Endothelial cell of umbilical vein (primary cell): ENCODE measurements at regions of chr6 and their contacts with region 1.

Region 1: DNA sequence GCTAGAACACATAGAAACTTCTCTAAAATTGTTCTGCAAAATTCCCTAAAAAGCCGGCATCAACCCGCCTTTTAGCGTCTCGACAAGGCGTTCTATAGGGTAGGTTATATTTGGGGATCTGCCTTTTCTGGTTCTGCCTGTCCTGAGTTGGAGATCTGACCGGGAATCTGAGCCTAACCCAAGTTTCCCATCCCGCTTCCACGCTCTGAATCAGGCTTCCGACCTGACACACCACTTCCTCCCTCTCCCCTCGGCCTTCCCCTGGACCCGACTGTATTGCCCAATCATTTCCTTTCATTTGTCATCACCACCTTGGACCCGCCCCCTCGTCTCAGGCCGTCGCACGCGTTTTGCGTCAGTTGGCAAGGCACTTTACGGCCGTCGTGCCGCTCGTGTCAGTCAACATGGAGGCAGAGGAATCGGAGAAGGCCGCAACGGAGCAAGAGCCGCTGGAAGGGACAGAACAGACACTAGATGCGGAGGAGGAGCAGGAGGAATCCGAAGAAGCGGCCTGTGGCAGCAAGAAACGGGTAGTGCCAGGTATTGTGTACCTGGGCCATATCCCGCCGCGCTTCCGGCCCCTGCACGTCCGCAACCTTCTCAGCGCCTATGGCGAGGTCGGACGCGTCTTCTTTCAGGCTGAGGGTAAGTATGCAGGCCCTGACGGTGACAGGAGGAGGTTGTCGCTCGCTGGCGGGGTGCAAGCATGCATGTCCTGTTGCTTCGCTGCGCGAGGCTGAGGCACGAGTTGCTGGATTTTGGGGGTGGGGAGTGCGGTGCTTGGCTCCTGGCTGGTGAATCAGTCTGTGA is at the start of gene ABT1:
- DNase-seq: peak; percentile 99
- H3K4me3 ChIP-seq: peak within 1 kb of the TSS; percentile 30 to 87 (median 69)
- H3K27ac ChIP-seq: peak within 1 kb of the TSS; percentile 80
- H3K4me1 ChIP-seq: peaks cover 18% of the 10 kb centered on the region
- H3K27me3 ChIP-seq: peaks cover 8 to 11% of the 10 kb centered on the region in 2 experiments
- CTCF ChIP-seq: no peak
- POLR2A ChIP-seq: peak; percentile 80
- total RNA-seq, gene ABT1: 18.5 and 20.1 TPM in 2 replicates

Region 2: GRCh38 chr6:26270903-26271667 is 325.7 kb before region 1 on chr6:
- CTCF ChIA-PET with region 1: interaction called, 15 read pairs
- POLR2A ChIA-PET with region 1: no interaction called
- dilution Hi-C with region 1: no loop called
- intact Hi-C with region 1: no loop called
- DNase-seq: peak; percentile 93
- H3K4me3 ChIP-seq: peak overlapping the region; percentile 41 to 77 (median 51)
- H3K27ac ChIP-seq: peak overlapping the region; percentile 72
- H3K4me1 ChIP-seq: peaks cover 25% of the 10 kb centered on the region
- H3K27me3 ChIP-seq: no peaks in the 10 kb centered on the region
- CTCF ChIP-seq: no peak
- POLR2A ChIP-seq: peak; percentile 90

Region 3: GRCh38 chr6:26336355-26337198 is 260.2 kb before region 1 on chr6:
- CTCF ChIA-PET with region 1: interaction called, 159 read pairs
- POLR2A ChIA-PET with region 1: interaction called, 4 read pairs
- dilution Hi-C with region 1: no loop called
- intact Hi-C with region 1: loop called (anchors 1 kb)
- DNase-seq: no peak
- H3K4me3 ChIP-seq: no peak overlapping the region
- H3K27ac ChIP-seq: no peak overlapping the region
- H3K4me1 ChIP-seq: peaks cover 15% of the 10 kb centered on the region
- H3K27me3 ChIP-seq: peaks cover 0 to 2% of the 10 kb centered on the region in 2 experiments
- CTCF ChIP-seq: no peak
- POLR2A ChIP-seq: no peak

Region 4: GRCh38 chr6:26553635-26554446 is 42.9 kb before region 1 on chr6:
- CTCF ChIA-PET with region 1: interaction called, 10 read pairs
- POLR2A ChIA-PET with region 1: no interaction called
- dilution Hi-C with region 1: no loop called
- intact Hi-C with region 1: no loop called
- DNase-seq: peak; percentile 93
- H3K4me3 ChIP-seq: peak overlapping the region; percentile 29 to 94 (median 70)
- H3K27ac ChIP-seq: peak overlapping the region; percentile 71
- H3K4me1 ChIP-seq: peaks cover 13% of the 10 kb centered on the region
- H3K27me3 ChIP-seq: no peaks in the 10 kb centered on the region
- CTCF ChIP-seq: no peak
- POLR2A ChIP-seq: no peak

Region 5: GRCh38 chr6:26659042-26659999 is 62.5 kb after region 1 on chr6 and contains the start of gene ZNF322:
- CTCF ChIA-PET with region 1: interaction called, 5 read pairs
- POLR2A ChIA-PET with region 1: interaction called, 3 read pairs
- dilution Hi-C with region 1: no loop called
- intact Hi-C with region 1: loop called (anchors 1 kb)
- DNase-seq: peak; percentile 95
- H3K4me3 ChIP-seq: peak within 1 kb of the TSS; percentile 53 to 89 (median 70)
- H3K27ac ChIP-seq: peak within 1 kb of the TSS; percentile 58
- H3K4me1 ChIP-seq: peaks cover 9% of the 10 kb centered on the region
- H3K27me3 ChIP-seq: peaks cover 6 to 13% of the 10 kb centered on the region in 2 experiments
- CTCF ChIP-seq: no peak
- POLR2A ChIP-seq: no peak
- total RNA-seq, gene ZNF322: 15.2 and 17.0 TPM in 2 replicates

Region 6: DNA sequence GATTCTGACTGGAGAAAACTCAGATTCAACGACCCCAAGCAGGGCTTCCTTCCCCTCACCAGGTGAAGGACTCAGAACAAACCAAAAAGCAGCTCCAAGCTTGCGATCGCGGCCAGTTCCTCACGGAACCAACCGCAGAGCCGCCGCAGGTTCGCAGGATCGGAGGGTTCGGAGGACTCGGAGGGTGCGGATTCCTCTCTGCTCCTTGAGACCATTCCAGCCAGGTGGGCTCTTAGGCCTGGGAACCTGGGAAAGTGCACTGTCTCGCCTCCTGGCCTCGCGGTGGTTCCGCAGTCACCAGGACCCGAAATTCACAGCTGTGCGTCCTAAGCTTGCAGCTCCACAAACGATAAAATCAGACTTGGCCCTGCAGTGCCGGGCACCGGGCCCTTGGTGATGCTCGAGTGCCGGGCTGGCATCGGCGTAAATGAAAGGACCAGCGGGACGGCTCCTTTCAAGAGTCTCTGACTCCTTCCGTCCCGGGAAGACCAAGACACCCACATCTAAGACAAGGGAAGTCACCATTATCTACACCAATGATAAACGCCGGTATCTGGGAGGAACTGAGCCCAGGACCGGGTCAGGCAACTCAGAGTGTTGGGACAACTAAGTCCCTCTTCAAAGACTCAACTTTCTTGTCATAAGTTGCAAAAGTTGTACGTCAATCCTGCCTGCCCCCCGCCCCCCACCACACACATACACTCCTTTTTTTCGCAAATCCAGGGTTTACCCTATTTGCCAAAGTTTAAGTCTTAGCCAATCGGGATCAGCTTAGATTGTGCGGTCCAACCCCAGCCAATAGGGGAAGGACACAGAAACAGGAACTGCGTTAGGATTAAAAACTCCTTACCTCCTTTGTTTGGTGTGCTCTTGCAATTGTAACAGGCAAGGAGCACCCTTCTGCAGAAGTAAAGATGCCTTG is 581.0 kb after region 1 on chr6:
- CTCF ChIA-PET with region 1: interaction called, 5 read pairs
- POLR2A ChIA-PET with region 1: no interaction called
- dilution Hi-C with region 1: no loop called
- intact Hi-C with region 1: loop called (anchors 5 kb)
- DNase-seq: peak; percentile 88
- H3K4me3 ChIP-seq: peak overlapping the region; percentile 34 to 94 (median 77)
- H3K27ac ChIP-seq: peak overlapping the region; percentile 41
- H3K4me1 ChIP-seq: no peaks in the 10 kb centered on the region
- H3K27me3 ChIP-seq: peaks cover 8 to 18% of the 10 kb centered on the region in 2 experiments
- CTCF ChIP-seq: peak; percentile 45 to 60
- POLR2A ChIP-seq: no peak